ENCODE measurements at regions of chr1 and their contacts with region 1.

Region 1: GRCh38 chr1:205493241-205494085 is 11.0 kb upstream of the CDK18 start:
- DNase-seq: peak; percentile 23 to 75 (median 75)
- H3K4me3 ChIP-seq: no peak overlapping the region
- H3K27ac ChIP-seq: no peak overlapping the region
- H3K4me1 ChIP-seq: peaks cover 0 to 4% (median 2%) of the 10 kb centered on the region in 4 experiments
- H3K27me3 ChIP-seq: peaks cover 0 to 54% (median 27%) of the 10 kb centered on the region in 5 experiments

Region 2: DNA sequence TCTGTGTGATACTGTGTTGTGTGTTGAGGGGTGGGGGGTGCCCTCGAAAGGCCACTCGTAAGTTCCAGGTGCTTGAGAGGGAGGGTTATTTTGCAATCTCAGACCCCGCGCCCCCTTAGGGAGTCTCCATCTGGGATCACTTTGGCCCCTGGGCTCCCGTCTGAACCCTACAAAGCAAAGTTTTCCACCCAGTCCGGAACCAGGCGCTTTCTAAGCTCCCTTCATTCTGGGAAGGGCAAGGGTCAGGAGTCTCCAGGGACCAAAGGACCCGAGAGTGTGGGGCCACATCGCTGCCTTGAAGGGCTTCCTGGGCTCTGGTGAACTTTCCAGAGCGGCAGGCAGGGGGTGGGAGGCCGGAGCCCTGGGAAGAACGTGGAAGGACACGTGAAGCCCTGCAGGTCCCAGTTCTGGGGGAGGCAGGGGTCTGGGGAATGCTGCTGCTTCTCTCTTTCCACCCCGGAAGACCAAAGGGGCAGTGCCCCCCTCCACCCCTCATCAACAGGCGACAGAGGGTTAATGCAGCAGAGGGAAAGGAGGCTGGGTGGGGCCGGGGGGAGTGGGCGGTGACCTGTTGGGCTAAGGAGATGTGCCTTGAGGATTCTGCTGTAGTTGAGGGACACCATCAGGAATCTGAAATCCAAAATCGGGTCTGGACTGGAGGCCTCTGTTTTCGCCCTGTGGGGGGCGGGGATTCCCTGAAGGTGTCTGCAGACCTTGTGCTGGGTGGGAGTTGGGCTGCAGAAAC is 11.7 kb after region 1 on chr1:
- CTCF ChIA-PET with region 1: interaction called, 72 read pairs
- POLR2A ChIA-PET with region 1: no interaction called
- DNase-seq: no peak
- H3K4me3 ChIP-seq: peak overlapping the region; percentile 54 to 86 (median 68)
- H3K27ac ChIP-seq: no peak overlapping the region
- H3K4me1 ChIP-seq: peaks cover 0 to 24% (median 20%) of the 10 kb centered on the region in 4 experiments
- H3K27me3 ChIP-seq: peaks cover 0 to 2% (median 0%) of the 10 kb centered on the region in 5 experiments

Region 3: GRCh38 chr1:205870236-205870635 is 376.8 kb after region 1 on chr1:
- CTCF ChIA-PET with region 1: no interaction called
- POLR2A ChIA-PET with region 1: no interaction called
- DNase-seq: no peak
- H3K4me3 ChIP-seq: no peak overlapping the region
- H3K27ac ChIP-seq: no peak overlapping the region
- H3K4me1 ChIP-seq: no peaks in the 10 kb centered on the region
- H3K27me3 ChIP-seq: peaks cover 0 to 12% (median 3%) of the 10 kb centered on the region in 5 experiments